Endothelial cell of umbilical vein (primary cell): ENCODE measurements at regions of chr6 and their contacts with region 1.

Region 1: GRCh38 chr6:148367411-148368024 is 24.9 kb downstream of the SASH1 start:
- DNase-seq: peak; percentile 99
- H3K4me3 ChIP-seq: no peak overlapping the region
- H3K27ac ChIP-seq: peak overlapping the region; percentile 96
- H3K4me1 ChIP-seq: peaks cover 75% of the 10 kb centered on the region
- H3K27me3 ChIP-seq: no peaks in the 10 kb centered on the region
- CTCF ChIP-seq: no peak
- POLR2A ChIP-seq: no peak

Region 2: GRCh38 chr6:148271711-148272439 is 95.6 kb before region 1 on chr6:
- CTCF ChIA-PET with region 1: interaction called, 4 read pairs
- POLR2A ChIA-PET with region 1: no interaction called
- dilution Hi-C with region 1: no loop called
- intact Hi-C with region 1: loop called (anchors 1 kb)
- DNase-seq: peak; percentile 89
- H3K4me3 ChIP-seq: peak overlapping the region in 1 of 3 experiments; percentile 45
- H3K27ac ChIP-seq: peak overlapping the region; percentile 93
- H3K4me1 ChIP-seq: peaks cover 47% of the 10 kb centered on the region
- H3K27me3 ChIP-seq: no peaks in the 10 kb centered on the region
- CTCF ChIP-seq: no peak
- POLR2A ChIP-seq: peak; percentile 33

Region 3: GRCh38 chr6:148329596-148330381 is 37.7 kb before region 1 on chr6:
- CTCF ChIA-PET with region 1: interaction called, 3 read pairs
- POLR2A ChIA-PET with region 1: no interaction called
- dilution Hi-C with region 1: no loop called
- intact Hi-C with region 1: loop called (anchors 1 kb)
- DNase-seq: peak; percentile 83
- H3K4me3 ChIP-seq: no peak overlapping the region
- H3K27ac ChIP-seq: peak overlapping the region; percentile 46
- H3K4me1 ChIP-seq: peaks cover 31% of the 10 kb centered on the region
- H3K27me3 ChIP-seq: no peaks in the 10 kb centered on the region
- CTCF ChIP-seq: no peak
- POLR2A ChIP-seq: no peak

Region 4: DNA sequence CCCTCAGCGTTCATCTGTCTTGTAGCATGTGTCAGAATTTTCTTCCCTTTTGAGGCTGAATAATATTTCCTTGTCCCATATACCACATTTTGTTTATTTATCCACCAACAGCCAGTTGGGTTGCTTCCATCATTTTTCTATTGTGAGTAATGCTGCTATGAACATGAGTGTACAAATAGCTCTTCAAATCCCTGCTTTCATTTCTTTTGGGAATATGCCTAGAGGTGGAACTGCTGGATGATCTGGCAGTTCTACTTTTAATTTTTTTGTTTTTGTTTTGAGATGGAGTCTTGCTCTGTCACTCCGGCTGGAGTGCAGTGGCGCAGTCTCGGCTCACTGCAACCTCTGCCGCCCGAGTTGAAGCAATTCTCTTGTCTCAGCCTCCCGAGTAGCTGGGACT is 39.9 kb after region 1 on chr6:
- CTCF ChIA-PET with region 1: interaction called, 6 read pairs
- POLR2A ChIA-PET with region 1: interaction called, 3 read pairs
- dilution Hi-C with region 1: no loop called
- intact Hi-C with region 1: loop called (anchors 1 kb)
- DNase-seq: peak; percentile 97
- H3K4me3 ChIP-seq: no peak overlapping the region
- H3K27ac ChIP-seq: peak overlapping the region; percentile 92
- H3K4me1 ChIP-seq: peaks cover 39% of the 10 kb centered on the region
- H3K27me3 ChIP-seq: no peaks in the 10 kb centered on the region
- CTCF ChIP-seq: no peak
- POLR2A ChIP-seq: no peak

Region 5: GRCh38 chr6:148451690-148452089 is 84.2 kb after region 1 on chr6:
- CTCF ChIA-PET with region 1: interaction called, 12 read pairs
- POLR2A ChIA-PET with region 1: interaction called, 6 read pairs
- dilution Hi-C with region 1: no loop called
- intact Hi-C with region 1: no loop called
- DNase-seq: no peak
- H3K4me3 ChIP-seq: no peak overlapping the region
- H3K27ac ChIP-seq: peak overlapping the region; percentile 61
- H3K4me1 ChIP-seq: peaks cover 85% of the 10 kb centered on the region
- H3K27me3 ChIP-seq: no peaks in the 10 kb centered on the region
- CTCF ChIP-seq: no peak
- POLR2A ChIP-seq: peak; percentile 37